GM13976 (cell line): ENCODE measurements at regions of chr9 and their contacts with region 1.

Region 1: DNA sequence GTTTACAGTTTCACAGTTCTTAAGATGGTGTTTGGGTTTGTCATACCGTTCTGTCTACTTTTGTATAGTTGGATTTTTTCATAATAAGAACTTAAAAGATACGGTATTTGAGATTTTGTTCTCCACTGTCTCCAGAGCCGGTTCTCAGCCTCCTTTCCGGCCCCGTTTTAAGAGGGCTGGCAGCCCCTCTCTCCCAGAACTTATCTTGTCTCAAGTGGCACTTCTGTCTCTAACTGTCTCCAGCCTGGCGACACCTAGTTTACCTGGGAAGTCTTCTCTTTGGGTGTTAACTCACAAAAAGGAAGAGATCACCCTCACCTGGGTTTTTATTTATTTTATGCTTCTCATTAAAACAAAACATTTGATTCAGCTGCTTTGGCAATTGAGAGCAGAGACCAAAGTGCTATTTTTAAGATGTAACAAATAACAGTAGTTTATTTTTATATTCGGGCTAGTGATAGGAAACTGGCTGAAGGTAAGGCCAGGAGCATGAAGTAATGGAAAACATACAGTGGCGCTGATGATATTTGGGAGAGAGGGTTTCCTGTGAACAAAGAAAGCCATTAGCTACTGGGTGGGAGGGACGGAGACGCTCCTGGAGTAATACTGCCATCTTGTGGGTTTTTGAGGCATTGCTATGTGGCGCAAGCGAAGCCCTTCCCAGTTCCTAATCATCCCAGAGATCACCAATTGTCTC is 48.3 kb downstream of the ACER2 start:
- DNase-seq: peak; percentile 66
- CTCF ChIP-seq: peak; percentile 79

Region 2: GRCh38 chr9:19184144-19184917 is 272.8 kb before region 1 on chr9:
- in situ Hi-C with region 1: loop called (anchors 10 kb)
- DNase-seq: peak; percentile 81
- CTCF ChIP-seq: peak; percentile 26

Region 3: DNA sequence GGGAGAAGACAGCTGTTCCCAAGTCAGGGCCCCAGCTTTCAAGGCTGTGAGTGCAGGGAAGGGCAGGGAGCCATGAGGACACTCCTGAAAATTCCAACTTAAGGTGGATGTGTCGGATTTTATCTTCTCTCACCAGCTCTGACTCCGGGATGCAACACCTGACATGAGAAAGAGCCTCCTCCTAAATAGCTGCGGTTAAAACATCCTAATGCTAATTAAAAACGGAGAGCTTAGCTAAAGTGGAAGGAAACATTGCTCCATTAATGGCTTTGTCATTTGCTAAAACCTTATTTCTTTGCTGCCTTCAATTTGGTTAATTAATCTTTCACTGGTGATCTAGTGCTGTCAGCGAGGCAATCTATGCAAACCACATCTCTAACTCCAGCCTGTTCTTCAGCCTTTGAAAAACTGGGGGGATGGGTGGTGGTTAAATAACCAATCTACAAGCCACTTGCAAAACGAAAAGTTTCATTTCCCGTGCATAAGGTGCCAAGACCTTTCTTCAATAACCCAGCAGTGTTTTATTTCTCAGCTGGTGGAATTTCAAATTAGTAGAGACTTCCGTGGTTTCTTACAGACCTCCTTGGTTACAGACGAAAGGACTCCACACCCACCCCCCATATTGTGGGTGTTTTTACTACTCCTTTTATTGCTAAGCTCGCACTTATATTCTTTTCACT is 785.5 kb after region 1 on chr9:
- in situ Hi-C with region 1: no loop called
- DNase-seq: peak; percentile 36
- CTCF ChIP-seq: no peak